ENCODE measurements at regions of chr19 and their contacts with region 1.

Region 1: GRCh38 chr19:47644762-47645482 is 36.0 kb downstream of the BICRA start:
- DNase-seq: no peak
- H3K4me3 ChIP-seq: no peak overlapping the region
- H3K4me3 Mint-ChIP-seq: peak overlapping the region; percentile 41
- H3K27ac Mint-ChIP-seq: peak overlapping the region; percentile 99
- H3K4me1 ChIP-seq: peaks cover 57% of the 10 kb centered on the region
- H3K4me1 Mint-ChIP-seq: peaks cover 39% of the 10 kb centered on the region
- H3K27me3 ChIP-seq: no peaks in the 10 kb centered on the region
- H3K27me3 Mint-ChIP-seq: no peaks in the 10 kb centered on the region
- CTCF ChIP-seq: no peak

Region 2: DNA sequence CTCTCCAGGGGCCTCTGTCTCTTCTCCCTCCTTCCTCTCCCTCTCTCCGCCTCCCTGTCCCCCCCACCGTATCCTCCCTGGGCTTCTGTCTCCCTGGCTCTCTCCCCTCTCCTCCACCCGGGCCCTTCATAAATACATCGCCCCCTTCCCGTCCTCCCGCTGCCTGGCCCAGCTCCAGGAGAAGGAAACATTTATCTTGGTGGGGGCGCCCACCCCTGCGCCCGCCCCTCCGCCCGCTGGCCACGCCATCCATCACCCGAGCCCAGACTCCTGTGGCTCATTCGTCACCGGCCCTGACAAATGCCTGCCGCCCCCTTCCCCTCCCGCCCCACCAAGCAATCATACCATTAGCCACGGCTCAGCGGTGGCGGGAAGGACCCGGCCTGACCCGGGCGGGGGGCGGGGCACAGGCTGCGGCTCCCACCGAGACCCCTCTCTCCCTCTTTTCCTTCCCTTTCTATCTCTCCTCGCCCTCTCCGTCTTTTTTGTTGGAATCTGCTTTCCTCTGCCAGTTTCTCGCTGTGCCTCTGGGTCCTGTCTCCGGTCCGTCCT is 223.0 kb before region 1 on chr19:
- CTCF ChIA-PET with region 1: no interaction called
- POLR2A ChIA-PET with region 1: no interaction called
- intact Hi-C with region 1: no loop called
- DNase-seq: no peak
- H3K4me3 ChIP-seq: no peak overlapping the region
- H3K4me3 Mint-ChIP-seq: peak overlapping the region; percentile 31
- H3K27ac Mint-ChIP-seq: no peak overlapping the region
- H3K4me1 ChIP-seq: no peaks in the 10 kb centered on the region
- H3K4me1 Mint-ChIP-seq: peaks cover 30% of the 10 kb centered on the region
- H3K27me3 ChIP-seq: peaks cover 8% of the 10 kb centered on the region
- H3K27me3 Mint-ChIP-seq: peaks cover 33% of the 10 kb centered on the region
- CTCF ChIP-seq: no peak

Region 3: DNA sequence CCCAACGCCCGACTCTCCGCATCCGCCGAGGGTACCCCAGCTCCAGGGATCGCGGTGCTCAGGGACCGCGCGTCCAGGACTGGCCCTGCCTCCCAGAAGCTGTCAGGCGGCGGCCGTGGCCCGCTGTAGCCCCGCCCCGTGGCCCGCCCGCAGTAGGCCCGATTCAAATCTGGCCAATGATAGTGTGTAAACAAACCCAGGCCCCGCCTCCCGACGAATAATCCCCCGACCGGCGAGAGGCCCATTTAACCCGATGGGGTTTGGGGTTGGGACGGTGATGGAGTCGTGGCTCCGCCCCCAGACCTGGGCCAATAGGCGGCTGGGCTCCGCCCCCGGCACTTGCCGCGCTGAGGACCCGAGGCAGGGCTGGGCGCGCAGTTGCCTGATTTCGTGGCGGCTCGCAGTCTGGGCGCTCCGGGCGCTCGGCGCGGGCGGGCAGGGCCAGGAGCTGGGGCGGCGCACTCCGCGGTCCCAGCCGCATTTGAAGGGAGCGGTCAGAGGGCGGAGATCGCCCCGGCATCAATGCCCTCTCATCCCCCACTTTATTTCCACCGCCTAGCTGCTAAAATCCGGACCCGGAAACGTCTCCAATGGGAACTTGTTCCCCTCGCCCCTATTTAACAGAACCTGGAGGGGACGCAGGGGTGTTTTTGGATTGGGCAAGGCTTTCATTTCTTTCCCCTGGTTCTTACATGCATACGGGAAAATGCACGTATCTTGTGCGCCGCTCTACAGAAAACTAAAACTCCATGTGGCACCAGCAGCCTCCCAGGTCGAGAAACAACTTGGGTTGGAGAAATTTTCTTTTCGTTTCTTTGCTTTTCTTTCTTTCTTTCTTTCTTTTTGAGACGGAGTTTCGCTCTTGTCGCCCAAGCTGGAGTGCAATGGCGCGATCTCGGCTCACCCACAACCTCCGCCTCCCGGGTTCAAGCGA is 44.4 kb before region 1 on chr19:
- CTCF ChIA-PET with region 1: interaction called, 3 read pairs
- POLR2A ChIA-PET with region 1: interaction called, 11 read pairs
- intact Hi-C with region 1: loop called (anchors 1 kb)
- DNase-seq: peak; percentile 100
- H3K4me3 ChIP-seq: peak overlapping the region; percentile 46
- H3K4me3 Mint-ChIP-seq: peak overlapping the region; percentile 77
- H3K27ac Mint-ChIP-seq: peak overlapping the region; percentile 87
- H3K4me1 ChIP-seq: peaks cover 24% of the 10 kb centered on the region
- H3K4me1 Mint-ChIP-seq: peaks cover 21% of the 10 kb centered on the region
- H3K27me3 ChIP-seq: no peaks in the 10 kb centered on the region
- H3K27me3 Mint-ChIP-seq: no peaks in the 10 kb centered on the region
- CTCF ChIP-seq: no peak

Region 4: GRCh38 chr19:47618771-47619170 is 26.2 kb before region 1 on chr19:
- CTCF ChIA-PET with region 1: interaction called, 20 read pairs
- POLR2A ChIA-PET with region 1: interaction called, 62 read pairs
- intact Hi-C with region 1: loop called (anchors 1 kb)
- DNase-seq: no peak
- H3K4me3 ChIP-seq: no peak overlapping the region
- H3K4me3 Mint-ChIP-seq: no peak overlapping the region
- H3K27ac Mint-ChIP-seq: peak overlapping the region; percentile 95
- H3K4me1 ChIP-seq: peaks cover 56% of the 10 kb centered on the region
- H3K4me1 Mint-ChIP-seq: peaks cover 44% of the 10 kb centered on the region
- H3K27me3 ChIP-seq: no peaks in the 10 kb centered on the region
- H3K27me3 Mint-ChIP-seq: no peaks in the 10 kb centered on the region
- CTCF ChIP-seq: no peak

Region 5: DNA sequence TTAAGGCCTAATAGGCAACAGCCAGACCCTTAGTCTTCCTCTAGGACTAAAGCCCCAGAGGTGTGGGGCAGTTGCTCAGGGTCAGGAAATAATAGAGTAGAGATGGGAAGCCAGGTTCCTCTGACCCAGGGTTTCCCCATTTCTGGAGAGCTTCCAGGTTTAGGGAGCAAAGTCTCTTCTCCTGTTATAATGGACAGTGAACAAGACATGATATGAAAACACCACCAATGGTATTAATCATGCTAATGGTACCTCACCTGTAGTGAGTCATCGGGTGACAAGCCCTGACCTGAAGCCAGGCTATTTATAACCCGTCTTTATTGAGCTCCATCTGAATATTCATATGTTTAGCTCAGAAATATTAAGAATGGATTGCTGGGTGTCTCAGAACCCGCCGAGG is 11.4 kb before region 1 on chr19:
- CTCF ChIA-PET with region 1: interaction called, 4 read pairs
- POLR2A ChIA-PET with region 1: interaction called, 10 read pairs
- intact Hi-C with region 1: no loop called
- DNase-seq: no peak
- H3K4me3 ChIP-seq: no peak overlapping the region
- H3K4me3 Mint-ChIP-seq: no peak overlapping the region
- H3K27ac Mint-ChIP-seq: peak overlapping the region; percentile 79
- H3K4me1 ChIP-seq: peaks cover 58% of the 10 kb centered on the region
- H3K4me1 Mint-ChIP-seq: peaks cover 54% of the 10 kb centered on the region
- H3K27me3 ChIP-seq: no peaks in the 10 kb centered on the region
- H3K27me3 Mint-ChIP-seq: no peaks in the 10 kb centered on the region
- CTCF ChIP-seq: no peak

Region 6: GRCh38 chr19:47663841-47664771 is 19.2 kb after region 1 on chr19:
- CTCF ChIA-PET with region 1: interaction called, 27 read pairs
- POLR2A ChIA-PET with region 1: interaction called, 29 read pairs
- intact Hi-C with region 1: loop called (anchors 1 kb)
- DNase-seq: peak; percentile 73
- H3K4me3 ChIP-seq: no peak overlapping the region
- H3K4me3 Mint-ChIP-seq: peak overlapping the region; percentile 53
- H3K27ac Mint-ChIP-seq: peak overlapping the region; percentile 94
- H3K4me1 ChIP-seq: peaks cover 94% of the 10 kb centered on the region
- H3K4me1 Mint-ChIP-seq: peaks cover 65% of the 10 kb centered on the region
- H3K27me3 ChIP-seq: no peaks in the 10 kb centered on the region
- H3K27me3 Mint-ChIP-seq: no peaks in the 10 kb centered on the region
- CTCF ChIP-seq: no peak

Measured in Caco-2 (cell line).